Naive thymus-derived CD4-positive, alpha-beta T cell (primary cell): ENCODE measurements at regions of chr12 and their contacts with region 1.

Region 1: GRCh38 chr12:132761032-132761920 is at the start of gene ANKLE2:
- DNase-seq: peak; percentile 35 to 77 (median 63)
- ATAC-seq: peak; percentile 75
- H3K4me3 ChIP-seq: peak within 1 kb of the TSS; percentile 88
- H3K4me3 Mint-ChIP-seq: peak within 1 kb of the TSS; percentile 89 to 97 (median 94)
- H3K27ac ChIP-seq: peak within 1 kb of the TSS; percentile 87
- H3K27ac Mint-ChIP-seq: peak within 1 kb of the TSS; percentile 92 to 97 (median 95)
- H3K4me1 ChIP-seq: peaks cover 9 to 13% of the 10 kb centered on the region in 2 donors
- H3K4me1 Mint-ChIP-seq: peaks cover 25 to 43% (median 26%) of the 10 kb centered on the region in 7 donors
- H3K27me3 ChIP-seq: no peaks in the 10 kb centered on the region
- H3K27me3 Mint-ChIP-seq: no peaks in the 10 kb centered on the region
- total RNA-seq, gene ANKLE2: 69.5 to 95.5 (median 92.2) TPM

Region 2: GRCh38 chr12:132083941-132084620 is 677.2 kb before region 1 on chr12:
- CTCF ChIA-PET with region 1: no interaction called
- POLR2A ChIA-PET with region 1: no interaction called
- intact Hi-C with region 1: loop called in 1 of 2 experiments (anchors 5 kb)
- DNase-seq: peak; percentile 75 to 93 (median 83)
- ATAC-seq: peak; percentile 97
- H3K4me3 ChIP-seq: peak overlapping the region; percentile 52
- H3K4me3 Mint-ChIP-seq: peak overlapping the region; percentile 85 to 98 (median 91)
- H3K27ac ChIP-seq: peak overlapping the region; percentile 89
- H3K27ac Mint-ChIP-seq: peak overlapping the region in 8 of 9 donors; percentile 74 to 93 (median 88)
- H3K4me1 ChIP-seq: peaks cover 9 to 10% of the 10 kb centered on the region in 2 donors
- H3K4me1 Mint-ChIP-seq: peaks cover 17 to 35% (median 28%) of the 10 kb centered on the region in 7 donors
- H3K27me3 ChIP-seq: no peaks in the 10 kb centered on the region
- H3K27me3 Mint-ChIP-seq: no peaks in the 10 kb centered on the region

Region 3: DNA sequence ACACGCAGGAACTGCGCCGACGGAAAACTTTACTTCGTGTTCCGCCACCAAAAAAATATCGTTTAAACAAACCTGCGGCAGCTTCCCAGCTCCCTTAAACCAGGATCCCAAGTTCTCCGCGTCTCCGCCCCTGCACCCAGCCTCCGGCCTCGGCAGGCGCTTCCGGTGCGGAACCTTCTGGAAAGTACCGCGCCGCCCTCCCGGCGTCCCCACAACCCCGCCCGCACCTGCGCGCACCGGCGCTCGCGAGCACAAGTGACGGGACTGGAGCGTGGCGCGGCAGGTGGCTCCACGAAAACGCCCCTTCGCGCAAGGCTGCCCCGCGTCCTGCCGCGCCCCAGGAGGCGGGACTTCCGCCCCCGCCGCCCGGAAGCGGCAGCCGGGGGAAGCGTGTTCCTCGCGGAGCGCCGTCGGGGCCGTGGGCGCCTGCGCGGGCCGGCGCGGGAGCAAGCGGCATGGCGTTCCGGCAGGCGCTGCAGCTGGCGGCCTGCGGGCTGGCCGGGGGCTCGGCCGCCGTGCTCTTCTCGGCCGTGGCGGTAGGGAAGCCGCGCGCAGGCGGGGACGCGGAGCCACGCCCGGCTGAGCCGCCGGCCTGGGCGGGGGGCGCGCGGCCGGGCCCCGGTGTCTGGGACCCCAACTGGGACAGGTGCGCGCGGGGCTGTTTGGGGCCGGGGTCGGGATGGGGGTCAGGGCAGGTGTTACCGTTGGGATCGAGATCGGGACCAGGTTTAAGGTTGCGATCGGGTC is 50.7 kb before region 1 on chr12 and contains the start of gene PGAM5:
- CTCF ChIA-PET with region 1: no interaction called
- POLR2A ChIA-PET with region 1: no interaction called
- intact Hi-C with region 1: loop called (anchors 1 kb)
- DNase-seq: peak; percentile 91 to 97 (median 95)
- ATAC-seq: peak; percentile 98
- H3K4me3 ChIP-seq: peak within 1 kb of the TSS; percentile 62
- H3K4me3 Mint-ChIP-seq: peak within 1 kb of the TSS; percentile 84 to 98 (median 88)
- H3K27ac ChIP-seq: peak within 1 kb of the TSS; percentile 92
- H3K27ac Mint-ChIP-seq: peak within 1 kb of the TSS; percentile 87 to 96 (median 92)
- H3K4me1 ChIP-seq: peaks cover 6 to 11% of the 10 kb centered on the region in 2 donors
- H3K4me1 Mint-ChIP-seq: peaks cover 0 to 36% (median 22%) of the 10 kb centered on the region in 7 donors
- H3K27me3 ChIP-seq: no peaks in the 10 kb centered on the region
- H3K27me3 Mint-ChIP-seq: no peaks in the 10 kb centered on the region
- total RNA-seq, gene PGAM5: 19.3 to 51.7 (median 21.4) TPM

Region 4: GRCh38 chr12:132798836-132799235 is 37.6 kb after region 1 on chr12:
- CTCF ChIA-PET with region 1: no interaction called
- POLR2A ChIA-PET with region 1: no interaction called
- intact Hi-C with region 1: no loop called
- DNase-seq: no peak
- ATAC-seq: no peak
- H3K4me3 ChIP-seq: no peak overlapping the region
- H3K4me3 Mint-ChIP-seq: no peak overlapping the region
- H3K27ac ChIP-seq: no peak overlapping the region
- H3K27ac Mint-ChIP-seq: no peak overlapping the region
- H3K4me1 ChIP-seq: no peaks in the 10 kb centered on the region
- H3K4me1 Mint-ChIP-seq: peaks cover 0 to 4% (median 0%) of the 10 kb centered on the region in 7 donors
- H3K27me3 ChIP-seq: no peaks in the 10 kb centered on the region
- H3K27me3 Mint-ChIP-seq: no peaks in the 10 kb centered on the region

Region 5: GRCh38 chr12:132828706-132829534 is 67.6 kb after region 1 on chr12 and contains the start of gene GOLGA3:
- CTCF ChIA-PET with region 1: no interaction called
- POLR2A ChIA-PET with region 1: interaction called, 4 read pairs
- intact Hi-C with region 1: loop called (anchors 1 kb)
- DNase-seq: peak; percentile 92 to 98 (median 95)
- ATAC-seq: peak; percentile 96
- H3K4me3 ChIP-seq: peak within 1 kb of the TSS; percentile 95
- H3K4me3 Mint-ChIP-seq: peak within 1 kb of the TSS; percentile 92 to 98 (median 96)
- H3K27ac ChIP-seq: peak within 1 kb of the TSS; percentile 99
- H3K27ac Mint-ChIP-seq: peak within 1 kb of the TSS; percentile 98 to 100 (median 100)
- H3K4me1 ChIP-seq: peaks cover 8 to 25% of the 10 kb centered on the region in 2 donors
- H3K4me1 Mint-ChIP-seq: peaks cover 28 to 69% (median 58%) of the 10 kb centered on the region in 7 donors
- H3K27me3 ChIP-seq: no peaks in the 10 kb centered on the region
- H3K27me3 Mint-ChIP-seq: peaks cover 0 to 3% (median 0%) of the 10 kb centered on the region in 5 donors
- total RNA-seq, gene GOLGA3: 46.3 to 65.7 (median 63.6) TPM

Region 6: DNA sequence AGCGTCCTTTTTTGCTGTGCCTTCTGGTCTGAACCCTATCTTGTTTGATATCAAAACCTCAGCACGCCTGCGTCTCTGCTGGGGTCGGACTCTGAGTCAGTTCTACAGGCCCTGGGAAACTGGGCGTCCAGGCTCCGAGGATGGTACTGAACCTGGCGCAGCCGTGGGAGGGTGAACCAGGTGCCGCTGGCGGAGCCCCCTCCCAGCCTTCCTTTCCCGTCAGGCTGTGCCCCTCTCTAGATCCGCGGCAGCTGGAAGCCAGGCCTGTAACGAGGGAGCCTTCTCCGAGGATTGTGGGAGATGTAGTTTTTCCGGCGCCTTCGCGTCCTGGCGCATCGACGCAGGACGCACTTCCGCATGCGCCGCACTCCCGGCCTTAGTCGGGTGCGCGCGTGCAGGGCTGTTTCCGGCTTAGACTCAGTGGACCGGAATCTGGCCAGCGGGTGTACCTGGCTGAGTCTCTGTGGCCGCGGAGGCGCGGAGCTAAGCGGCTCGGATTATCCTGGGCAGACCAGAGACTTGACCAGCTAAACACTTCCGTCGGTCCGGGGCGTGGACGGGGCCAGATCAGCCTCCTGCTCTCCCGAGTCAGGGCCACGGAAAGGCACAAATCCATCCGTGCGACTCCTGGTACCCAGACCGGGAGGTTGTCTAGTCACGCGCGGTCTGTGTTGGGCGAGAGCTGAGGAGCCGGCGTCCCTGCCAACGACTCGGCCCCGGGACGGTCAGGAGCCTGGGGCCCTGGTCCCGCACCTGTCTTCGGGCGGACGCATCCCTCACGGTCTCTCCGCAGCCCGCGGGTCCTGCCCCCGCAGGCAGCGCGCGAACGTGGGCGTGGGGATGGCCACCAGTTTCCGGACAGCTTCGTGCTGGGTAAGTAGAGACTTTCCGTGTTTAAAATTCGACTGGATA is 225.0 kb after region 1 on chr12 and contains the start of gene ZNF26:
- CTCF ChIA-PET with region 1: no interaction called
- POLR2A ChIA-PET with region 1: no interaction called
- intact Hi-C with region 1: loop called in 1 of 2 experiments (anchors 1 kb)
- DNase-seq: peak; percentile 66 to 90 (median 86)
- ATAC-seq: peak; percentile 99
- H3K4me3 ChIP-seq: peak within 1 kb of the TSS; percentile 96
- H3K4me3 Mint-ChIP-seq: peak within 1 kb of the TSS; percentile 84 to 98 (median 94)
- H3K27ac ChIP-seq: peak within 1 kb of the TSS; percentile 87
- H3K27ac Mint-ChIP-seq: peak within 1 kb of the TSS; percentile 90 to 98 (median 97)
- H3K4me1 ChIP-seq: peaks cover 11 to 12% of the 10 kb centered on the region in 2 donors
- H3K4me1 Mint-ChIP-seq: peaks cover 23 to 42% (median 39%) of the 10 kb centered on the region in 7 donors
- H3K27me3 ChIP-seq: no peaks in the 10 kb centered on the region
- H3K27me3 Mint-ChIP-seq: peaks cover 0 to 10% (median 4%) of the 10 kb centered on the region in 5 donors
- total RNA-seq, gene ZNF26: 16.0 to 38.8 (median 33.6) TPM

Region 7: DNA sequence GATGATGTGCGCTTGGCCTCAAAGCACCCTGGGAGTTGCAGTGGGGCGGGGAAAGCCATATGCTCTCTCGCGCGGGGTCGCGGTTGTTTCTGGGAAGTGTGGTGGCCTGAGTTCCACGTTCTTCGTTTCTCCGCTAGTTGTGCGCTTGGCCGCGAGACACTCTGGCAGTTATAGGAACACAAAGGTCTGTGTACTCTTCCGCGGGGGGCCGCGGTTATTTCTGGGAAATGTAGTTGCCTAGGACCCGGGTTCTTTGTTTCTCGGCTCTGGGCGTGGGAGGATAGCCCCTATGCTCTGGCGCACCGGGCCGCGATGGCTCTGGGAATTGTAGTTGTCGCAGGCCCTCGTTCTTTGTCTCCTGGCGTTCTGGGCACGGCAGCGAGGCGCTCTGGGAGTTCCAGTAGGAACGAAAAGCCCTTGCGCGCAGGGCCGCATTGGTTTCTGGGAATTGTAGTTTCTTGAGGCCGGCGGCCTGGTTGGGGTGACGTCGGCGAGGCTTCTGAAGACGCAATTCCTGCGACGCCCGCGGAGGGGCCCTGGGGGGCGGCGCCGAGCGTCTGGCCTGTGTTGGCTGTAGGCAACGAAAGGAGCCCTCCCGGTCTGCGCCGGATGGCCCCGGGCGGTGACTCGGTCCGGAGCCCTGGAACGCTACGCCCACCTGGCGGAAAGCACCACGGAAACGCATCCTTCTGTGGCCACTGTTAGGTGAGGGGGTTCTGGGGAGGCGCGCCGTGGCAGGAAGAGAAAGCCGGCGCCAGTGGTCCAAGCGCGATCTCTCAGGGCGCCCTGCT is 319.3 kb after region 1 on chr12 and contains the start of gene ZNF140:
- CTCF ChIA-PET with region 1: no interaction called
- POLR2A ChIA-PET with region 1: no interaction called
- intact Hi-C with region 1: loop called in 1 of 2 experiments (anchors 1 kb)
- DNase-seq: peak; percentile 91 to 97 (median 96)
- ATAC-seq: peak; percentile 77
- H3K4me3 ChIP-seq: peak within 1 kb of the TSS; percentile 94
- H3K4me3 Mint-ChIP-seq: no peak within 1 kb of the TSS
- H3K27ac ChIP-seq: peak within 1 kb of the TSS; percentile 100
- H3K27ac Mint-ChIP-seq: peak within 1 kb of the TSS in 1 of 9 donors; percentile 41
- H3K4me1 ChIP-seq: peaks cover 7 to 11% of the 10 kb centered on the region in 2 donors
- H3K4me1 Mint-ChIP-seq: peaks cover 0 to 22% (median 10%) of the 10 kb centered on the region in 7 donors
- H3K27me3 ChIP-seq: no peaks in the 10 kb centered on the region
- H3K27me3 Mint-ChIP-seq: no peaks in the 10 kb centered on the region
- total RNA-seq, gene ZNF140: 11.2 to 29.9 (median 16.0) TPM